ENCODE measurements at regions of chr22 and their contacts with region 1.

Region 1: DNA sequence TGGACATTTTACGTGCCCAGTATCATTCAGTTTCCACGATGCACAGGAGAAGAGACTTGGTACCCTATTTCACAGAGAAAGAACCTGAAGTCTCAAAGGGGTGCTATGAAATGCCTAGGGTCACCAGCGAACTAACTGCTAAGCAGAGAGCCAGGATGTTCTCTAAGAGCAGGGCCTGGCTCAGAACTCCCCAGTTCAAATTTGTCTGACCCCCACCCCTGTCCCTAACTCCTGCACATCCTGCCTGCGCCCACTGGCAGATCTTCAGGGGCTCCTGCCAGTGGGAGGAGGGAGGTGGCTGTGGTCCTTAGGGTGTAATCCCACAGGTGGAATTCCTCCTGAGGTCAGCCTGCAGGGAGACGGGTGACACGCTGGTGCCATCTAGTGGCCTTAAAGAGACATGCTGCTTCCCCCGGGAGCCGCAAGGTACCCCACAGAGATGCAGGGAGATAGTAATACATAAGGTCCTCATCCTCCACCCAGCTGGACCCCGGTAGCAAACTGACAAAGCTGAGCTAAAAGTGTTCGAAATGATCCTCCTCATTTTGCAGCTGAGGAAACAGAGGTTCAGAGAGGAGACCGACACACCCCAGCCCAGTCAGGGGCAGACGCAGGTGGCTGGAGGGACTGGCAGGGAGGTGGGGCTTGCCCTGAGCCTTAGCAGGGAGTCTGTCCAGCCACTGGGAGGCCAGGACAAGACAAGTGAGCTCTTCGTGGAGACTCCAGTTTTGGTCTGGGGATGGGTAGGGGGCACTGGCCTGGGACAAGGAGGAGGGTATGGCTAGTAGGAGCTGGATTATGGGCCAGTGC is 34.1 kb downstream of the MB start:
- DNase-seq: peak; percentile 85

Region 2: GRCh38 chr22:35350539-35351503 is 232.2 kb before region 1 on chr22:
- intact Hi-C with region 1: loop called (anchors 2 kb)
- DNase-seq: peak; percentile 97

Region 3: DNA sequence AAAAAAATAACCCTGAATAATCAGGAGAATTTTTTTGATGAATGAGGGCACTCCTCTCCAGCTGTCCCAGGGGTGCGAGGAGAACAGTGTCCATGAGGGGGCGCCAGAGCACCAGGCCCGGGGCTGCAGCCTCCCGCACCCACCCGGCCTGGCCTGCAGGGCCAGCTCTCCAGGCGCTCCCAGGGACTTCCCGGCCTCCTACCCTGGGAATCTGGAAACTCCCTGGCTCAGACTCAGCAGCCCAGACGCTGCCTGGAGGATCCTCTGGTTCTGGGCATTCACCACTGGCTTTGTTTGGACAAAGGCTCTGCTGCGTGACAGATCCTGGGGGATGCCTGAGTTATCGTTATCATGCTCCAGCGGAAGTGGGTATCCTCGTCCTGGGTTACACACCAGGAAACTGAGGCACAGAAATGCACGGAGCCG is 152.2 kb before region 1 on chr22:
- intact Hi-C with region 1: loop called (anchors 1 kb)
- DNase-seq: peak; percentile 94

Region 4: GRCh38 chr22:35446365-35446764 is 136.7 kb before region 1 on chr22:
- intact Hi-C with region 1: no loop called
- DNase-seq: no peak

Region 5: DNA sequence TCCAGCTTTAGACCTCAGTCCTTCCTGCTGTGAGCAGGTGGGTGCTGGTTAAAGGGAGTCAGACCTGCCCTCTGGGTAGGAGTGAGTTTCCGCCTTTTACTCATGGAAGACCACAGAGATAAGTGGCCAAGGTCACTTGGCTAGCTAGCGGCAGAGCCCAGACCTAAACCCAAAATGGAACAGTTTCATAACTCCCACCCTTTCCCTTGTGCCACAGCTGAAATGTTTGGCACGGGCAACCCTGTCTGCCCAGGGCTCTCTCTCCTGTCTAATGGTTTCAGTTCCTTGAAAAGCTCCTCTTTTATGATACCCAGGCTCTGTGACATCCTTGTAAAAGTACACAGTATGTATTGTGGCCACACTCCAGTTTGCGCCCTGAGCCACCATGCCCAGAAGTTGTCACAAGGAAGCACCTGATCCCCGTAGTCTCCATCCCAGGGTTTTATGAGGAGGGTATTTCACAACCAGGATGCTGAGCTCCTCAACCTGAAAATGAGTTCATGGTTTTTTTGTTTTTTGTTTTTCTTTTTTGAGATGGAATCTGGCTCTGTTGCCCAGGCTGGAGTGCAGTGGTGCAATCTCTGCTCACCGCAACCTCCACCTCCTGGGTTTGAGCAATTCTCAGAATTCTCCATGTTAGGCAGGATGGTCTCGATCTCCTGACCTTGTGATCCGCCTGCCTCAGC is 29.0 kb after region 1 on chr22:
- intact Hi-C with region 1: loop called (anchors 1 kb)
- DNase-seq: no peak

Region 6: DNA sequence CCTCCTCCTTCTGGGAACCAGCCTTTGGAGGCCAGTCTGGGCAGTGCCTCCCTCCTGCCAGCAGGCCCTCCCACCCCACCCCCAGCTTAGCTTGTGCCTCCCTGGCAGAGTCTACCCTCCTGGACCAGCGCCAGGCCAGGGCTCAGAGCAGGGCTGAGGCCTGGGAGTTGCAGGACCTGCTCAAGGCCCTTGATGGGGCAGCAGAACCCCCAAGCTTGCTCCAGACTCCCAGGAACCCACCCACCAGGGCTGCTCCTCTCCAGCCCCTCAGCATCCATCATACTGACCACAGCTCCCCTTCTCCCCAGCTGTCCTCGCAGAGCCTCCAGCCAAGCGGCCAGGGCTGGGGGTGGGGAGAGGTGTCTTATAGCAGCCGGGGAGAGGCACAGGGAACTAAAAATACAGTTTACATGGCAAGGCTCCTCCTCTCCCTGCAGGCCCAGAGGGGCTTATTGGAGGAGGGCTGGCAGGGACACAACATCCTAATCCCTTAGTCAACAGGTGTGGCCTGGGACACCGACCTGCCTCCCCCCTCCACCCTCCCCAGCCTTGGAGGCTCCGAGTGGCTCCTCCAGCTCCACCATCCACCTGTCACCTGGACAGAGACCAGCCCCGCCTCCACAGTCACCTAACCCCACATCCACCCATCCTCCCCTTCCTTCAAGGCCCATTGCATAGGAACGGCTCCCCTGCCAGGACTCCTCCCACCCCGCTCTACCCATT is 39.3 kb after region 1 on chr22:
- intact Hi-C with region 1: loop called (anchors 1 kb)
- DNase-seq: no peak

Region 7: GRCh38 chr22:35663371-35663770 is 80.3 kb after region 1 on chr22:
- intact Hi-C with region 1: no loop called
- DNase-seq: no peak

Measured in cardiac septum (tissue), 1 donor.